H1 (cell line): ENCODE measurements at regions of chr1 and their contacts with region 1.

Region 1: GRCh38 chr1:181088079-181089016 is at the start of gene IER5:
- DNase-seq: peak; percentile 76 to 97
- H3K4me3 ChIP-seq: peak within 1 kb of the TSS; percentile 58 to 72 (median 64)
- H3K27ac ChIP-seq: no peak within 1 kb of the TSS
- H3K4me1 ChIP-seq: peaks cover 0 to 4% (median under 1%) of the 10 kb centered on the region in 4 experiments; a peak in 2 of 7 replicates
- H3K27me3 ChIP-seq: peaks cover 0 to 31% (median 18%) of the 10 kb centered on the region in 4 experiments; a peak in 6 of 7 replicates
- CTCF ChIP-seq: no peak
- EP300 ChIP-seq: no peak
- POLR2A ChIP-seq: peak; percentile 99
- RAD21 ChIP-seq: peak in 1 of 2 experiments; percentile 2; a peak in 1 of 4 replicates
- total RNA-seq, gene IER5: 7.1 and 7.7 TPM in 2 replicates

Region 2: DNA sequence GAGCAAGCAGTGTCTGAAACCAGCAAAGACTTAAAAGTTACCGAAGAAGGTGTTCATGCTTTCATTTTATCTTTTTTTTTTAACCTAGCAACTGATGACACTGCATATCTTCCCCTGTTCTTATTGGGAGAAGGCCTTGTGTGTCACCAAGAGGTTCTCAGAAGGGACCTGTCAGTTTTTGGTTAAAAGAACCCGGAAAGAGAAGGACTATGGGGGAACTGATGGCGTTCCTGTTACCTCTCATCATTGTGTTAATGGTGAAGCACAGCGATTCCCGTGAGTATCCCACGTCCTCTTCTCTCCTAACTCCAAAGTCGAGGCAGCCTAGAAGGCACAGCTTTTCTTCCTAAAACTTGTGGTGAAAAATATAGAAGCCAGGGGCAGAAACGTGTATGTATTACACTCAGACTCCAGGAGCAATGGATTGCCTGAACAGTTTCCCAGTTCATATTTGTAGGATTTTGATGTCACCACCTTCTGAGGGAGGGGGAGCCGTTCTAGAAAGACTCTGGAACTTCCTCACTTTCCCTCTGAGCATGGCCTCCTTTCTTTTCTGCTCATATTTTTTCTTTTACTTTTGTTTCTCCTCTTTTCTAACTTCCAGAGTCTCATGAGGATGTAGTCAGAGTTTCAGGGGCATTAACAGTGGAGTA is 54.4 kb before region 1 on chr1 and contains the start of gene MR1:
- CTCF ChIA-PET with region 1: interaction called, 13 read pairs
- POLR2A ChIA-PET with region 1: interaction called, 7 read pairs
- DNase-seq: no peak
- H3K4me3 ChIP-seq: no peak within 1 kb of the TSS
- H3K27ac ChIP-seq: no peak within 1 kb of the TSS
- H3K4me1 ChIP-seq: no peaks in the 10 kb centered on the region
- H3K27me3 ChIP-seq: no peaks in the 10 kb centered on the region
- CTCF ChIP-seq: no peak
- EP300 ChIP-seq: no peak
- POLR2A ChIP-seq: no peak
- RAD21 ChIP-seq: no peak
- total RNA-seq, gene MR1: 0.19 TPM in 1 of 2 replicates, not detected in the other

Region 3: DNA sequence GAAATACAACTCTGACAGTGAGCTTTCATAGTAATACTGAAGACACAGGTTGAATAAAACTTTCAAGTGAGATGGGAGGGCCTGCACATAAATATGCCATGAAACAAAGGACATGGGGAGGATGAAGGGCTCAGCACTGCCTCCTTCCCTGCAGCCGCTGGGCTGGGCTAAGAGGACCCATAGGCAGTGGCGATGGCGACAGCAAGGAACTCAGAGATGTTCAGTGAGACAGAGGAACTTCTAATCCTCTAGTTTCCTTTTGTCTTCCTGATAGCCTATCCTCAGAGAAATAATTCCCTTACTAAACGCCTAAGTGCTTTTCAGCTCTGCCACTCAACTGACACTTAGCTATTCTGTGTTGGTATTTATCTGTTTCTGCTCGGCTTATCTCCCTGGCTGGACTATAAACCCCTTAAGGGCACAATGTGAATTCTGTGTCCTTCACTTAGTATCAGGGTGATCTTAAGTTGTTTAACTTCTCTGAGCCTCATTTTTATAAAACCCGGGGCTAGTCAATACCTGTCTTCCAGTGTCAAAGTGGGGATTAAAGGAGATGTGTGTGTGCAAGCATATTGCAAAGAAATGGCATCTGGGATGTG is 24.2 kb before region 1 on chr1:
- CTCF ChIA-PET with region 1: interaction called, 4 read pairs
- POLR2A ChIA-PET with region 1: interaction called, 10 read pairs
- DNase-seq: no peak
- H3K4me3 ChIP-seq: no peak overlapping the region
- H3K27ac ChIP-seq: no peak overlapping the region; the same call in 1 of the 2 replicates
- H3K4me1 ChIP-seq: peaks cover 0 to 7% (median 1%) of the 10 kb centered on the region in 4 experiments; a peak in 5 of 7 replicates
- H3K27me3 ChIP-seq: no peaks in the 10 kb centered on the region
- CTCF ChIP-seq: no peak
- EP300 ChIP-seq: no peak
- POLR2A ChIP-seq: no peak
- RAD21 ChIP-seq: no peak

Region 4: DNA sequence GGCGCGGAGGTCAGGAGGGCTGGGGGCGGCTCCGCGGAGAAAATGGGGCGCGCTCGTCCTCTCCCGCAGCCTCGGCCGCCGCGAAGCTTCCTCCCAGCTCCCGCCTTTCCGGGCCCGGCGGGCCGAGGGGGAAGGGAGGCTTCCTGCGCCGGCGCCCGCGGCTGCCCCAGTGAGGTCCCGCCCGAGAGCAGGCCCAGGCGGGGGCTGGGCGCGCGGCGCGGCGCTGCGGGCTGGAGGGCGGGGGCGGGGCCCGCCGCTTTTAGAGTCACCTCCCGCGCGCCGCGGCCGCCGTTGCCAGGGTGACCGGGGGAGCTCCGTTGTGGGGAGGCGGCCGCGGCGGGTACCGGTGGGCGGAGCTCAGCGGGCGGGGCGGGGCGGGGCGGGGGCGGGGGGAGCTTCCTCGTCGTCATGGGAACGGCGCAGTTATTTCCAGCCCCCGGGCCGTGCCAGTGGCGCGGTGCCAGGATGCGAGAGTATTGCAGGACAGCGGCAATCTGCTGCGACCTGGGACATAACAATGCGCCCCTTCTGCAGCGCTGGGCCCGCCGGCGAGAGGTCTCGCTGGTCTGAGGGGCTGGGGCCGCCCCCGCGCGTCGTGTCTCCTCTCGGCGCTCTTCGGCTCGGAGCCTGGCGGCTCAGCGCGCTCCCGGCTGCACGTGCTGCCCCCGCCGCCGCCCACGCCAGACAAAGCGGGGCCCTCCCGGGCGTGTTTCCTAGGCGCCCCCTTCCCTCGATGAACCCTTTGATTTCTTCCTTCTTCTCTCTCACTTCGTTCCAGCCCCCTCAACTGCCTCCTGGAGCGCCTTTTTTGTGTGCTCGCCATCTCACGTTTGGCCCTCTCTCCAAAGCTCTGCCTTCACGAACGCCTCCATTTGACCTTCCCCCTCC is 17.0 kb after region 1 on chr1:
- CTCF ChIA-PET with region 1: interaction called, 7 read pairs
- POLR2A ChIA-PET with region 1: interaction called, 253 read pairs
- DNase-seq: peak in 1 of 2 experiments; percentile 86
- H3K4me3 ChIP-seq: peak overlapping the region; percentile 53 to 75 (median 64)
- H3K27ac ChIP-seq: peak overlapping the region; percentile 62; the same call in 1 of the 2 replicates
- H3K4me1 ChIP-seq: peaks cover 8 to 40% (median 21%) of the 10 kb centered on the region in 4 experiments
- H3K27me3 ChIP-seq: peaks cover 9 to 42% (median 41%) of the 10 kb centered on the region in 4 experiments
- CTCF ChIP-seq: no peak
- EP300 ChIP-seq: no peak
- POLR2A ChIP-seq: 0 out of 3 replicates have a peak, but pooled peaks of 1 of the 2 experiments have one; percentile 27
- RAD21 ChIP-seq: no peak

Region 5: DNA sequence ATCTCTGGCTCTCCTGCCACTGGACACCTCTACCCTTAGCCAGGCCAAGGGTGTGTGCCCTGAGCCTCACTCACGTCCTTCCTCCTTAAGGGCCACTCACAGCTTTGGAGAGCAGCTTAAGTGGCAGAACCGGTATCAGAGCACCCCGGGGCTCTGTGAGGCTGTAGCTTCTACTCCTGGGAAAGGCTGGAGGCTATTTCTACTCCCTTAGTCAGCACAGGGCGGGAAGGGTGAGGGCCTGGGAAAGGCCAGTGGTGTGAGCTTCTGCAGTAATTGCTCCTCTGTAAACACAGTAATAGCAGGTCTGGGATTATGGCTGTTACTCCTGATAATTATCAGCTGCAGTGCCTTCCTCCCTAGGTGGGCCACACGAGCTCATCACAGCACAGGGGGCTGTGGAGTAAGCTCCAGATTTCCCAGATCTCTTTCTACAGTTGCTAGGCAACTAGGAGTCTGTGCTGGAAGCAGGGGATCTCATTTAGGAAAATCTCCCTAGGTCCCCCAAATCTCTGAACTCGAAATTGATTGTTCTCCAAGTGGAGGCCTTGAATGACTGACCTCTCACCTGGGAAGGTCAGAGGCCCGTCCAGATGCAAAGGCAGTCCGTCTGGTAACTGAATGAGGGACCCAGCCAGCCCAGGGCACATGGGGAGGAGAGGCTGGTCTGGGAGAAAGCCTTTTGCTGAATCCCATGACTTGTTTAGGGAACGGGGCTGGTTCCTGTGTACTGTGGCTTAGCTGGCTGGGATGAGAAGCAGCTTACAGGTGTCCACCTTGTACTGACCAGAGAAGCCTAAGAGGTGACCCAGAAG is 29.5 kb after region 1 on chr1:
- CTCF ChIA-PET with region 1: interaction called, 5 read pairs
- POLR2A ChIA-PET with region 1: interaction called, 14 read pairs
- DNase-seq: no peak
- H3K4me3 ChIP-seq: no peak overlapping the region
- H3K27ac ChIP-seq: no peak overlapping the region
- H3K4me1 ChIP-seq: peaks cover 2 to 9% (median 7%) of the 10 kb centered on the region in 4 experiments; a peak in 5 of 7 replicates
- H3K27me3 ChIP-seq: no peaks in the 10 kb centered on the region; a peak in 1 of 7 replicates
- CTCF ChIP-seq: no peak
- EP300 ChIP-seq: no peak
- POLR2A ChIP-seq: no peak
- RAD21 ChIP-seq: no peak

Region 6: DNA sequence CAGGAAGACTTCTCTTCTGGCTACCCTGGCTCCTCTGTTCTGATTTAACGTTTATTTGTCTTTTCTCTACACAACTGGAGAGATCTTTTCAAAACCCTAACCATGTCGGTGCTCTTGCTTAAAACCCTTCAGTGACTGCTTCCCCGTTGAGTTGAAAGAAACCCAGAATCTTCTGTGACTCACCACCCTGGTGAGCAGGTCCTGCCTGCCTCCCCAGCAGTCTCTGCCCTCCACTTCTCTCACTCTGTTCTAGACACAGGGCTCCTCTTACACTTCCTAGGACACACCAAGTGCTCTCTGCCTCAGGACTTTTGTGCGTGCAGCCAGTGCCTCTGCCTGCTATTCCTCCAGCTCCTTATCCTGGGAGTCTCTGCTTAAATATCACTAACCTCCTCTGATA is 131.6 kb after region 1 on chr1:
- CTCF ChIA-PET with region 1: no interaction called
- POLR2A ChIA-PET with region 1: no interaction called
- DNase-seq: no peak
- H3K4me3 ChIP-seq: no peak overlapping the region
- H3K27ac ChIP-seq: no peak overlapping the region
- H3K4me1 ChIP-seq: peaks cover 2 to 4% (median 3%) of the 10 kb centered on the region in 4 experiments; a peak in 3 of 7 replicates
- H3K27me3 ChIP-seq: no peaks in the 10 kb centered on the region
- CTCF ChIP-seq: no peak
- EP300 ChIP-seq: no peak
- POLR2A ChIP-seq: no peak
- RAD21 ChIP-seq: no peak